Breast epithelium (tissue), 4 donors: ENCODE measurements at regions of chr17 and their contacts with region 1.

Region 1: GRCh38 chr17:81027591-81028505 is 7.1 kb upstream of the BAIAP2 start:
- DNase-seq: no peak
- H3K4me3 ChIP-seq: peak overlapping the region in 2 of 3 donors; percentile 30 to 56
- H3K27ac ChIP-seq: no peak overlapping the region
- H3K4me1 ChIP-seq: no peaks in the 10 kb centered on the region
- H3K27me3 ChIP-seq: peaks cover 0 to 24% of the 10 kb centered on the region in 2 donors
- CTCF ChIP-seq: no peak
- POLR2A ChIP-seq: no peak

Region 2: GRCh38 chr17:81080019-81080418 is 52.2 kb after region 1 on chr17:
- intact Hi-C with region 1: no loop called
- DNase-seq: no peak
- H3K4me3 ChIP-seq: no peak overlapping the region
- H3K27ac ChIP-seq: no peak overlapping the region
- H3K4me1 ChIP-seq: peaks cover 7 to 10% of the 10 kb centered on the region in 2 donors
- H3K27me3 ChIP-seq: no peaks in the 10 kb centered on the region
- CTCF ChIP-seq: no peak
- POLR2A ChIP-seq: no peak

Region 3: DNA sequence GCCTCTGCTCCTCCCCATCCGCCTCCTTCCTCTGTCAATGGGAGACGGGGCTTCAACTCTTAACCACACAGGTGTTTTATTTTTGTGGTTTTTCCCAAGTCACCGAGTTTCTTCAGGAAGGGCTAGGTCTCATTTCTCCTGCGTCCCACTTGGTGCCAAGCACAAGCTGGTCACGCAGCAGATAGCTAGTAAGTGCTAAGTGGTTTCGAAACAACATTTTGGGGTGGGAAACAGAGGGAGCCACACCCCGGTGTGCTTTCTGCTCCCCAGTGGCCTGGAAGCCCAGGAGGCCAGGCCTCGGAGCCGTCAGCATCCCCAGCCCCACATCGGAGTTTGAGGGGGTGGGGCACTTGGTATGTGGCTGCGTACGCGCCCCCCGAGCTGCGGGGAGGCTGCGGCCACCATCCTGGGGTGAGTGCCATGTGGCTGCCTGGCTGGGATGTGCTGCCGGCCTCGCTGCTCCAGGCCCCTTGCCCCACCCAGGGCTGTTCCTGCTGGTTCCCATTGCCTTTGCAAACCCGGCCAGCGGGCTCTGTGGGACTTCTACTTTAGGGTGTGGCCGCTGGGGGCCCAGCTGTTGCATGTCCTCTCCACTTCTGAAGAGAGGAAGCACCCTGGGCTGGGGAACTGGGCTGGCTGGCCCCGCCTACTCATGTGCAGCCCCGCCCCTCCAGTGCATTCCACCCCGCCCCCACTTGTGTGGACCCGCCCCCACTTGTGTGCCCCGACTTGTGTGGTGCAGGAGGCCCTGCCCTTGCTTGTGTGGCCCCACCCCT is 62.7 kb after region 1 on chr17:
- intact Hi-C with region 1: loop called (anchors 2 kb)
- DNase-seq: no peak
- H3K4me3 ChIP-seq: no peak overlapping the region
- H3K27ac ChIP-seq: no peak overlapping the region
- H3K4me1 ChIP-seq: peaks cover 7 to 9% of the 10 kb centered on the region in 2 donors
- H3K27me3 ChIP-seq: no peaks in the 10 kb centered on the region
- CTCF ChIP-seq: no peak
- POLR2A ChIP-seq: no peak